ENCODE measurements at regions of chr17 and their contacts with region 1.

Region 1: DNA sequence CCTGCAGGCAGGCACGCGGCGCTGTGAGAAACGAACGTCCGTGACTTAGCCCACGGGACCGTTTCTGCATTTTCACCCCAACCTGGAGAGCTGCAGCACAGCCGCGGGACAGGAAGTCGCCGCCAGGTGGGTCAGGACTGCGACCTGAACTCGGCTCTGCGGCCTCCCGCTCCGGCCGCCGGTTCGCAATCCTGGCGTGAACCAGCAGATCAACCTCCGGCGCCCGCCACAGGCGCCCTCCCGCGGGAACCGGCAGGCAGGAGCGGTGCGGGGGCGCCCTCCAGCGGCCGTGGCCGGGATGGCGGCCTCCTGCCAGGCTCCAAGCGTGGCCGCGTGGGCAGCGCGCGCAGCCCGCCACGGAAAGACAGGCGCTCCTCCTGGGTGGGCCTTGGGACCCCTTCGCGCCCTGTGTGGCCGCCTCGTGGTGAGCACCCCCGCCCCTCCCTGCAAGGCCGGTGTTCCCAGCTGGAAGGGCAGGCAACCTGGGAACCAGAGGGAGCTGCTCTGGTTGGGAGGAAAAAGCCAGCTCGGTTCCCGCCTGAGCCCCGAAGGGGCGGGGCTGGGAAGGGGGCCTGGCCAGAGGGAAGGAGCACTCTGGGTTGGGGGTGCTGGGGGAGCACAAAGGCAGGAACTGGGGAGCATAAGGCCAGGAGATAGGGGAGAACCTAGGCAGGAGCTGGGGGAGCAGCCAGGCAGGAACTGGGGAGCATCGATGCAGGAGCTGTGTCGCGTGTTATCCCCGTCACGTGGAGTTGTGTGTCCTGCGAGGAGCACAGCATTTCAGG is 28.2 kb downstream of the ACTG1 start:
- DNase-seq: peak; percentile 90
- ATAC-seq: peak; percentile 61
- H3K4me3 Mint-ChIP-seq: peak overlapping the region; percentile 21
- H3K27ac Mint-ChIP-seq: no peak overlapping the region
- H3K4me1 Mint-ChIP-seq: peaks cover 28% of the 10 kb centered on the region
- H3K27me3 Mint-ChIP-seq: peaks cover 24% of the 10 kb centered on the region
- CTCF ChIP-seq: peak; percentile 98

Region 2: DNA sequence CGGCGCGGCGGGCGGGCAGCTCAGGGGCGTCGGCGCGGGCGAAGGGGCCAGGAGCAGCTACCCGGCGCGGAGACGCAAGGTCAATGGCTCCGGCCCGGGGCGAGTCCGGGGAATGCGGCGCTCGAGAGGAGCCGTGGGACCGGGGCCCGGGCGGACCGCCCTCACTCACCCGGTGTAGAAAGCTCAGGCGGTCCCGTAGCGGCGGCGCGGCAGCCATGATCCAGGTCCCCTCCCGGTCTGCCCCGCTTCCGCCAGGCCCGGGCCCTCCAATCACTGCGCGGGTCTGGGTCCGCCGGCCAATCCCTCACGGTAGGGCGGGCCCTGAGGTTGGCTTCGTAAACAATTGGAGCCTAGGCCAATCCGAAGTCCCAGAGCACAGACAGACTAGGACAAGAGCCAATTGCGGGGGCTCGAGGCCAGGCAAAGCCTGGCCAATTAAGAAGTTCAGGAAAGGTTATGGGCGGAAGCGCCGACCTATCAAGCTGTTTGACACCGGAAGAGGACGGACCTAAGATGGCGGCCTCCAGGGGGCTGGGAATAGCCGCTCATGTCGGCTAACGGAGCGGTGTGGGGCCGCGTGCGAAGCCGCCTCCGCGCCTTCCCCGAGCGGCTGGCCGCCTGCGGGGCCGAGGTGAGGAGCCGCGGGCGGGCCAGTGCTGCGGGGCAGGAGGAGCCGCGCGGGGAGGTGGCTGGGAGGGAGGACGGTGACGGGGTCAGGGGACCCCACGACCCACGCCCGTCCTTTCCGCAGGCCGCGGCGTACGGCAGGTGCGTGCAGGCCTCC is 245.4 kb before region 1 on chr17 and contains the starts of genes NDUFAF8 and TEPSIN:
- CTCF ChIA-PET with region 1: interaction called, 10 read pairs
- POLR2A ChIA-PET with region 1: interaction called, 4 read pairs
- intact Hi-C with region 1: no loop called
- DNase-seq: peak; percentile 98
- ATAC-seq: peak; percentile 97
- H3K4me3 Mint-ChIP-seq: peak within 1 kb of the TSS; percentile 95
- H3K27ac Mint-ChIP-seq: peak within 1 kb of the TSS; percentile 97
- H3K4me1 Mint-ChIP-seq: peaks cover 31% of the 10 kb centered on the region
- H3K27me3 Mint-ChIP-seq: no peaks in the 10 kb centered on the region
- CTCF ChIP-seq: no peak
- total RNA-seq, gene NDUFAF8: 72.3 to 75.4 TPM
- total RNA-seq, gene TEPSIN: 28.2 to 32.2 TPM

Region 3: DNA sequence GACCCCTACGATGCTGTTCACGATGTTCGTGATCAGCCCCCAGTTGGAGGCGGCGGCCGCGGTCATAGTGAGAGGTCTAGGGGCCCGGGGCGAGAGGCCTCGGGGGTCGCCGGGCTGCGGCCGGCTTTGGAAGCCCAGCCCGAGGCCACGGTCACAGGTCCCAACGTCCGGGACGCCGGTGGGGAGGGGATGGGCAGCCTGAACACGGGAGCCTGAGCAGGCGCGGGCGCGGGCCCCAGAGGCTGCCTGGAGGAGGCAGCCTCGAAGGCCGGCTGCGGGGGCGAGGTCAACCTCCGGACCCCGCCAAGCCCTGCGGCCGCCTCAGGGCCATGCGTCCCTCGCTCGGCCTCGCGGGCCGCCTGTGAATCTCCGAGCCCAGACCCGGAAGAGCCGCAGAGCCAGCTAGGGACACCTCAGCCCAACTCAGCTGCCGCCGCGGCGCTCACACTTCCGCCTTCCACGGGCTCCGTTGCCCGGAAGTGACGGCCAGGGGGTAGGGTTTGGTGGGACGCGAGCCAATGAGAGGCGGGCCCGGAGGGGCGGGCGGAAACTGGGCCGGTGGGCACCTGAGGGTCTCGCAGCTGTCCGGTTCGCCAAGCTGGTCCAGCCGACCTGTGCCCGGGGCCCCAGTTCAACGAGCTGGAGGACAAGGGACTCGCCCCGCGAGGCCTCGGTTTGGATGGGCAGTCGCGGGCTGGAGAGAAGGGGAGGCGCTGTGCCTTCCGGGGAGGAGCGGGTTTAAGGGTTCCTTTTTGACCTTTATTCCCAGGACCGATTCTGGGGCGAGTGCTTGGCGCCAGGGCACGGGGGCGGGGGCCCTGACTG is 189.3 kb before region 1 on chr17 and contains the start of gene SLC38A10:
- CTCF ChIA-PET with region 1: interaction called, 47 read pairs
- POLR2A ChIA-PET with region 1: interaction called, 4 read pairs
- intact Hi-C with region 1: loop called (anchors 10 kb)
- DNase-seq: peak; percentile 94
- ATAC-seq: peak; percentile 90
- H3K4me3 Mint-ChIP-seq: peak within 1 kb of the TSS; percentile 90
- H3K27ac Mint-ChIP-seq: peak within 1 kb of the TSS; percentile 97
- H3K4me1 Mint-ChIP-seq: peaks cover 33% of the 10 kb centered on the region
- H3K27me3 Mint-ChIP-seq: no peaks in the 10 kb centered on the region
- CTCF ChIP-seq: no peak
- total RNA-seq, gene SLC38A10: 42.7 to 45.4 TPM

Region 4: DNA sequence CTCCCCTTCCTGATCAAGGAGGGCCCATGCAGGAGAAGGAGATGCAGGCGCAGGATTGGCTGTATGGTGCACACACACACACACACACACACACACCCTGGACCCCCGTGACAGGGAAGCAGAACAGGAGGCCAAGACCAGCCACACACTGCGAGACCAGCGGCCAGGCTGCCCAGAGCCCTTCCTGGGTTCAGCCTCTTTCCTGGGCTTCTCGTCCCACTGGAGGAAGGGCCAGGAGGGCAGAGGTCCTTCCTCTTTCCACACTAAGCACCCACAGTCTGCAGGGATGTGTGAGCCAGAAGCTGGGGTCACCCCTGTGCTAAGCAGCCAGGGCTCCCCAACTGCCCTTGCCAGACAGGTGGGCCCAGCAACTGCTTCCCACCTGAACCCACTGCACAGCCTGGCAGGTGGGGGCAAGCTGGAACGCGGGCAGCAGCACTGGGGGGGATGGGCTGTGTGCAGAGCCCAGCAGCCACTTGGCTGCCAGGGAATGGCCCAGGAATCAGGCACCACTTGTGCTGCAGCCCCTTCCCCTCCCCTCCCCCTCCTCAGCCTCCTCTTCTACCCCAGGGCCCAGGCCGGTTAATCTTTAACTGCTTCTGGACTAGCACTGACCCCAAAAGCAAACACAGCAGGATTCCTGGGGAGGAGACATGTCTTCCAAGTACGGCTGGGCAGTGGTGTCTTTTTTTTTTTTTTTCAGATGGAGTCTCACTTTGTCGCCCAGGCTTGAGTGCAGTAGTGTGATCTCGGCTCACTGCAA is 144.7 kb before region 1 on chr17:
- CTCF ChIA-PET with region 1: no interaction called
- POLR2A ChIA-PET with region 1: no interaction called
- intact Hi-C with region 1: no loop called
- DNase-seq: no peak
- ATAC-seq: no peak
- H3K4me3 Mint-ChIP-seq: no peak overlapping the region
- H3K27ac Mint-ChIP-seq: no peak overlapping the region
- H3K4me1 Mint-ChIP-seq: peaks cover 14% of the 10 kb centered on the region
- H3K27me3 Mint-ChIP-seq: peaks cover 42% of the 10 kb centered on the region
- CTCF ChIP-seq: no peak

Region 5: DNA sequence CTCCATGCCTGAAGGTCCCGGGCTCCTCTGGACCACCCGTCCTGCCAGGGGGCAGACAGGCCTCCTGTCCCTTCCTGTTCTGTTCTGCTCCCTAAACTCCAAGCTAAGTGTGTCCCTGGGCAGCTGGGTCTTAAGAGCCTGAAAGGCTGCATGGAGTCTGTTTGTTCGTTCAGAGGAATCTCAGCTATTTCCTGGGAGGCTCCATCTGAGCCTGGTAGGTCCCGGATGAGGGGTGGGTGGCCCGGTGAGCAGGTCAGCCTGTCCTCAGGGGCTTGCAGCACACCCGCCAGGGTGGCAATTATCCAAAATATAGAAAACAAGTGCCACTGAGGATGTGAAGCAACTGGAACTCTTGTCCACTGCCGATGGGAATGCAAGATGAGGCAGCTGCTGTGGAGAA is 15.7 kb after region 1 on chr17:
- CTCF ChIA-PET with region 1: interaction called, 15 read pairs
- POLR2A ChIA-PET with region 1: interaction called, 23 read pairs
- intact Hi-C with region 1: no loop called
- DNase-seq: no peak
- ATAC-seq: no peak
- H3K4me3 Mint-ChIP-seq: no peak overlapping the region
- H3K27ac Mint-ChIP-seq: no peak overlapping the region
- H3K4me1 Mint-ChIP-seq: no peaks in the 10 kb centered on the region
- H3K27me3 Mint-ChIP-seq: no peaks in the 10 kb centered on the region
- CTCF ChIP-seq: no peak

Region 6: DNA sequence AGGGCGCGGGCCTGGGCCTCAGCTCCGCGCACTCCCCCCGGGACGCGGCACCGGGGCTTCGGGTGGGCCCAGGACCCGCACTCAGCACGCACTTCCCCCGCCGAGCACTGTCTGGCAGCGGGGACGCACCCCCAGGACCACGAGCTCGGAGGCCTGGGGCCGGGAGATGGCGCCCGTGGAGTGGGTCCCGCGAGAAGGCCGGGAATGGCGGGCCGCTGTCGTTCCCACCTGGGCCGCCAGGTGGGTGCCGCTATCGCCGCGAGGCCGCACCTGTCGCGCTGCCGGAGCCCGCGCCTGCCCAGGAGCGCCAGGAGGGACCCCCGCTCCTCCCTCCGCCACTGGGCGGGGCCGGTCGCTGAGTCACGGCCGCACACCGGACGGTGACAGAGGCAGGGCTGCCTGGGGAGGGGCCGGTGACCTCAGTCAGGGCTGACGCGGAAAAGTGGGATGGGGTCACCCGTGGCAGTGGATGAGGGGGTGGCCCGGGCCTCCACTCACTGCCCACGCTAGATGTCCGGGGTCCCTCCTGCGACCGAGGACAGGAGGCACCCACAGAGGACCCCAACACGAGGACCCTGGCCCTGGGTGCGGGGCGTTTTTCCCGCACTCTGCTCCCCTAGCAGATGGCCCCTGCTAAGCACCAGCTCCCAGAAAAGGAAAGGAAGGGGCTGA is 35.0 kb after region 1 on chr17:
- CTCF ChIA-PET with region 1: interaction called, 11 read pairs
- POLR2A ChIA-PET with region 1: interaction called, 5 read pairs
- intact Hi-C with region 1: no loop called
- DNase-seq: peak; percentile 78
- ATAC-seq: peak; percentile 59
- H3K4me3 Mint-ChIP-seq: peak overlapping the region; percentile 35
- H3K27ac Mint-ChIP-seq: no peak overlapping the region
- H3K4me1 Mint-ChIP-seq: peaks cover 25% of the 10 kb centered on the region
- H3K27me3 Mint-ChIP-seq: no peaks in the 10 kb centered on the region
- CTCF ChIP-seq: peak; percentile 76